ENCODE measurements at regions of chr16 and their contacts with region 1.

Region 1: DNA sequence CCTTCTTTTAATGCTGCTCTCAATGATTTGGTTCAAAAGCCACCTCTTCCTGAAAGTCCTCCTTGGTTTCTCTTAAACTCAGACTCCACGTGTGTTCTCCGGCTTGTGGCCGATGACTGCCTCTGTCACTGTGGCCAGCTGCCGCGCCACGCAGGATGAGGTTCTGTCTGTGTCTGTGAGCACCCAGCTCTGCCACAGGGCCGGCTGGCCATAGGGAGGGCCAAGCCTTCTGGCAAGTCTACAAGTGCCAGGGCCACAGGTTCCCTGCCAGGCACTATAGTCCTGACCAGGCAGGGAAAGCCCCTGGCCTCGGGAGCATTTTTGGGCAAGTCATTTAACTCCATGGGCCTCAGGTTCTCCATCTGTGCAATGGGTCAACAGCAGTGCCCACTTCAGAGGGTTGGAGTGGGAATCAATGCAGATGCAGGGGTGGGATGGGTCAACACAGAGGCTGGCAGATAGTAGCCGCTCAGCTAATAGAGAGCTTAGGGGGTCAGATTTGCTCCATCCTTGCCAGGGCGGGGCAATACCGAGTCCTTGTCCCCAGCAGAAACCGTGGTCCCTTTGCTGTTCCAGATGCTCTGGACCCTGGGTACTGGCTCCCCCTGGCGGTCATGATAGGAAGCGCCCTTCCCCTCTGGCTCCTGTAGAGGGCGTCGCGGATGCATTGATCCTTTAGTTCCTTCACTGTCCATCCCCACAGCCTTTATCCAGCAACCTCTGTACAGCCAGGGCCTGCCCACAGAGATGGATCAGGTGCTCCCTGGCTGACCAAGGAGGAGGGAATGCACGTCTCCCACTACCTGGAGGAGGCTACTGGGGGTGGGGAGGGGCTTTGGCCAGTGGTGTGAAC is 19.3 kb upstream of the ADGRG3 start:
- DNase-seq: peak; percentile 83
- ATAC-seq: peak; percentile 81
- H3K4me3 ChIP-seq: no peak overlapping the region
- H3K27ac ChIP-seq: no peak overlapping the region
- H3K4me1 ChIP-seq: peaks cover 29% of the 10 kb centered on the region
- H3K27me3 ChIP-seq: no peaks in the 10 kb centered on the region
- CTCF ChIP-seq: peak; percentile 100
- EP300 ChIP-seq: no peak; a peak in 1 of 4 replicates
- POLR2A ChIP-seq: no peak
- RAD21 ChIP-seq: peak; percentile 100

Region 2: DNA sequence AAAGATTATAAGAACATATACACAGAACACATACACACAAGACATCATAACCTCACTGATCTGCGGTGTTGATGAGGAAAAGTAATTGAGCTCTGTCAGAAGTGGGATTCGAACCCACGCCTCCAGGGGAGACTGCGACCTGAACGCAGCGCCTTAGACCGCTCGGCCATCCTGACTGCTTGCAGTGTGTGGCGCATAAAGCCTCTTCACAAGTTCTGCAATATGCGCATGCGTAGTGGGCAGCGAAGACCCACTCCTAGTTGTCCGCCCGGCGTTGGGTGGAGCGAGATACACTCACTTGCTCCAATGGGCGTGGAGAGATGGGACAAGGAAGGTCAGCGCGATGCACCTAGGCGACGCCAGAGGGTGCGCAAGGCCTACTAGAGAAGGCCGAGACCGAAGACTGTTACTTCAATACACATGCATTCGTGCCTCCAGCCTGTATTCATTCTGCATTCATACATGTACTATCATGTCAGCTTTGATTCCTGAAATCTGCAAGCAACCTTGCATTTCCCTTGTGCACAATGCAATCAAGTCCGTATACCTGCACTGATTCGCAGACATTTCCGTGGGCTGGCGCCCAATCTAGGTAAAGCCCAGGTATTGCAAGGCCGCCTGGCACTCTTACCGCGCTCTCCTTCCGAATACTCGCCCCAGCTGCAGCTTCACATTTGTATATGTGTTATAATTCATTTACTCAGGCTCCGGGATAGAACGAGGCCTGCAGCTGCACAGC is 348.3 kb before region 1 on chr16:
- CTCF ChIA-PET with region 1: no interaction called
- POLR2A ChIA-PET with region 1: no interaction called
- in situ Hi-C with region 1: no loop called
- intact Hi-C with region 1: no loop called
- DNase-seq: peak; percentile 99
- ATAC-seq: peak; percentile 72
- H3K4me3 ChIP-seq: peak overlapping the region; percentile 62 to 84 (median 63)
- H3K27ac ChIP-seq: peak overlapping the region; percentile 59
- H3K4me1 ChIP-seq: peaks cover 76% of the 10 kb centered on the region
- H3K27me3 ChIP-seq: no peaks in the 10 kb centered on the region; a peak in 1 of 5 replicates
- CTCF ChIP-seq: peak; percentile 100
- EP300 ChIP-seq: peak in 1 of 2 experiments; percentile 16; a peak in 1 of 4 replicates
- POLR2A ChIP-seq: no peak
- RAD21 ChIP-seq: peak; percentile 100

Region 3: GRCh38 chr16:57576429-57576870 is 72.4 kb before region 1 on chr16:
- CTCF ChIA-PET with region 1: interaction called, 119 read pairs
- POLR2A ChIA-PET with region 1: no interaction called
- in situ Hi-C with region 1: no loop called
- intact Hi-C with region 1: loop called (anchors 1 kb)
- DNase-seq: peak; percentile 59
- ATAC-seq: peak; percentile 90
- H3K4me3 ChIP-seq: no peak overlapping the region
- H3K27ac ChIP-seq: no peak overlapping the region
- H3K4me1 ChIP-seq: peaks cover 10% of the 10 kb centered on the region; the same call in 1 of the 2 replicates
- H3K27me3 ChIP-seq: no peaks in the 10 kb centered on the region
- CTCF ChIP-seq: peak; percentile 98
- EP300 ChIP-seq: no peak
- POLR2A ChIP-seq: no peak
- RAD21 ChIP-seq: peak; percentile 85

Region 4: DNA sequence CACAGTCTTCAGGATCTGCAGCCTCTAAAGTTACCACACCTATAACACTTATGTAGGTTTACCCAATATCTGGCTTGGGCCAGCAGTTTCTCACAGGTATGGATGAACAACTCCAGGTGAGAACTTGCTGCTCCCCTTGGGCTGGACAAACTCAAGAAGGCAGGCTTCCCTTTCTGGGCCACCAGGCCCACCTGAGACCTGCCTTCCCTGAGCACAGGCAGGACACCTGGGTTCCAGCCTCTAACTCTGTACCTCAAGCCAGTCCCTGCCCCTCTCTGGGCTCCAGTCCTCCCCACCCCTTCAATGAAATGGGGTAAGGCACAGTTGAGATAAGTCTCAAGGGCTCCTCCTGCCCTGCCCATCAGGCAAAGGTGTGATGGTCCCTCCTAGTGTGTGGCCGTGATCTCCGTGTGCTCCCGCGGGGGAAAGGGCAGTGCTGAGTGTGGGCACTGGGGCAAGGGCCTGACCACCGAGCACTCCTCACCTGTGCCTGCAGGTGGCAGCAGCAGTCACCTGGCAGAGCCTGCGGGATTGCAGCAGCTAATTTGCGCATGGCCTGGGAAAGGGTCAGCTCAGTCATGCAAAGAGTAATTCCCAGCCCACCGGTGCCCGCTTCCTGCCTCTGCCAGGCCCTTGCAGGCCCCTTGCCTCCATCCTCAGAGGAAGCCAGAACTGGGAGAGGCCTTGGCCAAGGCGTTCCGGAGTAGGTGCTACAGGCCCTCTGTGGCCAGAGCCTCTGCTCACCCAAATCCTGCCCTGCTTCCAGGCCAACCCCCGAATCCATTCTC is 48.6 kb before region 1 on chr16:
- CTCF ChIA-PET with region 1: interaction called, 571 read pairs
- POLR2A ChIA-PET with region 1: interaction called, 3 read pairs
- in situ Hi-C with region 1: loop called (anchors 5 kb)
- intact Hi-C with region 1: loop called (anchors 1 kb)
- DNase-seq: peak; percentile 70
- ATAC-seq: peak; percentile 99
- H3K4me3 ChIP-seq: no peak overlapping the region; a peak in 1 of 6 replicates
- H3K27ac ChIP-seq: no peak overlapping the region
- H3K4me1 ChIP-seq: peaks cover 9% of the 10 kb centered on the region; the same call in 1 of the 2 replicates
- H3K27me3 ChIP-seq: no peaks in the 10 kb centered on the region
- CTCF ChIP-seq: peak; percentile 100
- EP300 ChIP-seq: no peak
- POLR2A ChIP-seq: no peak
- RAD21 ChIP-seq: peak; percentile 98

Region 5: GRCh38 chr16:57623248-57624043 is 25.4 kb before region 1 on chr16:
- CTCF ChIA-PET with region 1: interaction called, 21 read pairs
- POLR2A ChIA-PET with region 1: interaction called, 5 read pairs
- in situ Hi-C with region 1: no loop called
- intact Hi-C with region 1: no loop called
- DNase-seq: peak; percentile 91
- ATAC-seq: peak; percentile 21
- H3K4me3 ChIP-seq: peak overlapping the region in 1 of 3 experiments; percentile 37; a peak in 2 of 6 replicates
- H3K27ac ChIP-seq: no peak overlapping the region
- H3K4me1 ChIP-seq: peaks cover 72% of the 10 kb centered on the region
- H3K27me3 ChIP-seq: no peaks in the 10 kb centered on the region
- CTCF ChIP-seq: no peak
- EP300 ChIP-seq: peak; percentile 49 to 88; a peak in 2 of 4 replicates
- POLR2A ChIP-seq: no peak; a peak in 1 of 4 replicates
- RAD21 ChIP-seq: no peak

Region 6: GRCh38 chr16:57667526-57668258 is 18.9 kb after region 1 on chr16:
- CTCF ChIA-PET with region 1: interaction called, 14 read pairs
- POLR2A ChIA-PET with region 1: no interaction called
- in situ Hi-C with region 1: no loop called
- intact Hi-C with region 1: no loop called
- DNase-seq: peak; percentile 91
- ATAC-seq: peak; percentile 93
- H3K4me3 ChIP-seq: peak overlapping the region in 2 of 3 experiments; percentile 50 to 60; a peak in 4 of 6 replicates
- H3K27ac ChIP-seq: peak overlapping the region; percentile 79
- H3K4me1 ChIP-seq: peaks cover 69% of the 10 kb centered on the region
- H3K27me3 ChIP-seq: no peaks in the 10 kb centered on the region
- CTCF ChIP-seq: peak; percentile 79
- EP300 ChIP-seq: peak; percentile 79 to 87
- POLR2A ChIP-seq: peak; percentile 75 to 77
- RAD21 ChIP-seq: peak; percentile 42

Region 7: DNA sequence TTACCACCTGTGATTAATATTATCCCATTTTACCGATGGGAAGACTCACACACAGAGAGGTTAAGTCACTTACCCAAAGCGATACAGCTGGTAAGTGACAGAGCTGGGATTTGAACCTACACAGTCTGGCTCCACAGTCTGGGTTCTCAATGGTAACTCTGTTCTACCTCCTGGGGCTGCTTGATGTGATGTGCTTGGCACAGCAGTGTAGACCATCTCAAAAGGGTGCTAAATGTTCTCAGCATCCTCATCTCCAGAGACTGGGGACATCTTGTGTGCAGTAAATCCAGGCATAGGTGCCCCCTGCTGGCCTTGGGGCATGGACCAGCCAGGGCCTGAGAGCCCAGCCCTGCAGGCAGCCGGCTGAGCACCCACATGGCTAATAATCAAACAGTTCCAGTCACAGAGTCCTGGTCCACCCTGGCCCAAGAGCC is 71.3 kb after region 1 on chr16:
- CTCF ChIA-PET with region 1: interaction called, 151 read pairs
- POLR2A ChIA-PET with region 1: no interaction called
- in situ Hi-C with region 1: no loop called
- intact Hi-C with region 1: loop called (anchors 1 kb)
- DNase-seq: peak; percentile 72
- ATAC-seq: peak; percentile 96
- H3K4me3 ChIP-seq: no peak overlapping the region
- H3K27ac ChIP-seq: no peak overlapping the region
- H3K4me1 ChIP-seq: peaks cover 29% of the 10 kb centered on the region
- H3K27me3 ChIP-seq: no peaks in the 10 kb centered on the region
- CTCF ChIP-seq: peak; percentile 98
- EP300 ChIP-seq: 0 out of 4 replicates have a peak, but pooled peaks of 1 of the 2 experiments have one; percentile 10
- POLR2A ChIP-seq: no peak
- RAD21 ChIP-seq: peak; percentile 98

Measured in HepG2 (cell line).